ENCODE measurements at regions of chr11 and their contacts with region 1.

Region 1: GRCh38 chr11:82906244-82906654 is 4.7 kb downstream of the DDIAS start:
- DNase-seq: no peak
- ATAC-seq: no peak

Region 2: DNA sequence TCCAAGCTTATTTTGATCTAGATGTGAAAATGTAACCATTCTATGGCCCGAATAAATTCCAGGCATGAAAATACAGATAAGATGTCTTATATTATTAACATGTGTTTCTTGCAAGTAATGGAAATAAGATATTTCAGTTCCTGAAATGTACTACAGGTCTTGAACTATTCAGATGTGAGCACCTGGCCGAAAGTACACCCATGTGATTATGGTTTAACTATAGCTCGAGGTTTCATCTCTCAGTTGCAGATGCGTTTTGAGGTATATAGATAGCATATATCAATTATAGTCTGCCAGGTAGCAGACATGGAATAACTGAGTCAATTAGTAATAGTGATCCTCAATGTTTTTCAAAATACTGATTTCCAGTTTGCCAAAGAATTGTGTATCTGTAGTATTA is 63.6 kb after region 1 on chr11:
- intact Hi-C with region 1: no loop called
- DNase-seq: no peak
- ATAC-seq: no peak

Region 3: GRCh38 chr11:83249972-83250593 is 343.8 kb after region 1 on chr11:
- intact Hi-C with region 1: loop called (anchors 5 kb)
- DNase-seq: no peak
- ATAC-seq: peak; percentile 71

Measured in Right ventricle myocardium superior (tissue), 1 donor.